ENCODE measurements at regions of chr1 and their contacts with region 1.

Region 1: DNA sequence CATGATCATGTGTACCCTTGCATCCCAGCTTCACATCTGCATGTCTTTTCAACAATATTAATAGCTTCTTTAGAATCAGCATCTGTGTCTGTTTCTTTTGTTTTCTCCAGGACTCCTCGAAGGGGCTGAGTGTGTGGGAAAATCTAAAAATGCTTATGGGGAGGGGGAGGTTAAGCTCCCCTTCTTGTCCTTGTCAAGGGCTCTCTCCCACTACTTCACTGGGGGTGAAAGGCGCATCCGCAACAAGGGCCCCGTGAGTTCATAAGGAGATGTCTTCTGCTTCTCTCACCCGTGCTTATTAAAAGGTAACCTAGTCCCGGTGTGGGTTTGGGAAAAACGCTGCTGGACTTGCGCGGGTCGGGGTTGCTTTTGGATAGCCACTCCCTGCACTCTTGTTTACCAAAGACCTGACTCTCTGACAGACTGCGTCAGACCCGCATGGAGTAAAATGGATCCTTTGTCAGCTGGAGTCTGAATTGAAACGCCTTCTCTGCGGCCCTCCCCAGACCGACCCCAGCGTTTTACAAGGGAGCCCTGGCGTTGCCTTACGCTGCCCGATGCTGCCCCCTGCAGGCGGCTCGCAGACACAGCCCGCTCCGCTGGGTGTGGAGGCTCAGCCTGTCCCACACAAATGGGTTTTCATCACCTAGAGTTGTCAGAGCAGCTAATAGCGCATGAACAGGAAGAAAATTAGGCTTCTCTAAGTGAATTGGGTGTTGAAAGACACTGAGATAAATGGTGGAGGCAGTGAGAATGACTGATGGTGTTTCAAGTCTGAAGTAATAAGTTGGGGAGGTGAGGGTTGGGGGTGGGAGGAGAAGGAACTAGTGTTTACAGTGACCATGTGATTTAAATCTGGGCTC is 53.8 kb downstream of the IER5 start:
- DNase-seq: peak; percentile 96
- H3K4me3 ChIP-seq: peak overlapping the region; percentile 36 to 53 (median 39)
- H3K27ac ChIP-seq: peak overlapping the region in 3 of 4 donors; percentile 1 to 49 (median 25)
- H3K4me1 ChIP-seq: peaks cover 12 to 31% (median 26%) of the 10 kb centered on the region in 4 donors
- H3K27me3 ChIP-seq: no peaks in the 10 kb centered on the region
- CTCF ChIP-seq: peak; percentile 96 to 98 (median 97)
- EP300 ChIP-seq: no peak
- POLR2A ChIP-seq: no peak

Region 2: DNA sequence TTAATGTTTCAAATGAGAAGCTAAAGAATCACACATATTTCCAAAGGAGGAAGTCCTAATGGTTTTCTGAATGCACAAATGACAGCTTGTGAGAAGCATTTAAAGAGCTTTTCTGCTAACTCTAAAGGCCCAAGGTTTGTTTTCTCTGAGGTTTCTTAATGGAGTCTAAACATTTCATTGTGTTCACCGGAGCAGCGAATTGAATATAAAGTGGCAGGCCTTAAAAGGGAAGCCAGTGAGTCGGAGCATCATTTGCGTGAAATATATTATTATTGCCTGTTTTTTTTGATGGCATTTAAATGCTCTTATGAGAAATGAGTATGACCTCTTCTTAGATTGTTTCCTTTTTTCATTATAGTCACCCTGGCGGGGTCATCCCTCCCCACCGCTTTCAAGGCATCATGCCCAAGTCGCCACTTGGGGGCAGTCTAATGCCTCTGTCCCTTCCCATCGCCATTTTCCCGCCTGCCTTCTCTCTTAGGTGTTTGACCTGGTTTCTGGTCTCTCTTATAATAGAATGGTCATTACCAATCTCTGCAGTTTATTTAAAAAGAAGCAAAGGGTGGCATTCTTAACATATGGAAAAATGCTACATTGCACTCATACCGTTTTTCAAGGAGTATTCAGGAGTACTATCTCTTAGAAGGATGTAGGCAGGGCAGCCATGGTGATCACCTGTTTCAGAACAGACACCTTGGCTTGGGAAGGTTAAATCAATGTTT is 608.9 kb before region 1 on chr1:
- intact Hi-C with region 1: loop called (anchors 10 kb)
- DNase-seq: no peak
- H3K4me3 ChIP-seq: no peak overlapping the region
- H3K27ac ChIP-seq: no peak overlapping the region
- H3K4me1 ChIP-seq: peaks cover 4 to 9% (median 5%) of the 10 kb centered on the region in 4 donors
- H3K27me3 ChIP-seq: no peaks in the 10 kb centered on the region
- CTCF ChIP-seq: peak; percentile 81 to 87 (median 84)
- EP300 ChIP-seq: no peak
- POLR2A ChIP-seq: no peak

Region 3: GRCh38 chr1:180881806-180882509 is 260.4 kb before region 1 on chr1:
- intact Hi-C with region 1: loop called (anchors 2 kb)
- DNase-seq: no peak
- H3K4me3 ChIP-seq: no peak overlapping the region
- H3K27ac ChIP-seq: no peak overlapping the region
- H3K4me1 ChIP-seq: no peaks in the 10 kb centered on the region
- H3K27me3 ChIP-seq: no peaks in the 10 kb centered on the region
- CTCF ChIP-seq: peak; percentile 39 to 50 (median 47)
- EP300 ChIP-seq: no peak
- POLR2A ChIP-seq: no peak

Region 4: GRCh38 chr1:181038399-181038873 is 103.9 kb before region 1 on chr1:
- intact Hi-C with region 1: loop called (anchors 1 kb)
- DNase-seq: no peak
- H3K4me3 ChIP-seq: no peak overlapping the region
- H3K27ac ChIP-seq: no peak overlapping the region
- H3K4me1 ChIP-seq: peaks cover 15 to 63% (median 48%) of the 10 kb centered on the region in 4 donors
- H3K27me3 ChIP-seq: no peaks in the 10 kb centered on the region
- CTCF ChIP-seq: peak; percentile 62 to 79 (median 75)
- EP300 ChIP-seq: no peak
- POLR2A ChIP-seq: no peak

Region 5: GRCh38 chr1:181088079-181089016 is 54.0 kb before region 1 on chr1 and contains the start of gene IER5:
- intact Hi-C with region 1: loop called (anchors 2 kb)
- DNase-seq: peak; percentile 99
- H3K4me3 ChIP-seq: peak within 1 kb of the TSS; percentile 81 to 98 (median 90)
- H3K27ac ChIP-seq: peak within 1 kb of the TSS; percentile 93 to 98 (median 98)
- H3K4me1 ChIP-seq: peaks cover 35 to 39% (median 37%) of the 10 kb centered on the region in 4 donors
- H3K27me3 ChIP-seq: no peaks in the 10 kb centered on the region
- CTCF ChIP-seq: no peak
- EP300 ChIP-seq: no peak
- POLR2A ChIP-seq: peak; percentile 99
- total RNA-seq, gene IER5: 14.5 to 22.0 (median 16.7) TPM

Region 6: DNA sequence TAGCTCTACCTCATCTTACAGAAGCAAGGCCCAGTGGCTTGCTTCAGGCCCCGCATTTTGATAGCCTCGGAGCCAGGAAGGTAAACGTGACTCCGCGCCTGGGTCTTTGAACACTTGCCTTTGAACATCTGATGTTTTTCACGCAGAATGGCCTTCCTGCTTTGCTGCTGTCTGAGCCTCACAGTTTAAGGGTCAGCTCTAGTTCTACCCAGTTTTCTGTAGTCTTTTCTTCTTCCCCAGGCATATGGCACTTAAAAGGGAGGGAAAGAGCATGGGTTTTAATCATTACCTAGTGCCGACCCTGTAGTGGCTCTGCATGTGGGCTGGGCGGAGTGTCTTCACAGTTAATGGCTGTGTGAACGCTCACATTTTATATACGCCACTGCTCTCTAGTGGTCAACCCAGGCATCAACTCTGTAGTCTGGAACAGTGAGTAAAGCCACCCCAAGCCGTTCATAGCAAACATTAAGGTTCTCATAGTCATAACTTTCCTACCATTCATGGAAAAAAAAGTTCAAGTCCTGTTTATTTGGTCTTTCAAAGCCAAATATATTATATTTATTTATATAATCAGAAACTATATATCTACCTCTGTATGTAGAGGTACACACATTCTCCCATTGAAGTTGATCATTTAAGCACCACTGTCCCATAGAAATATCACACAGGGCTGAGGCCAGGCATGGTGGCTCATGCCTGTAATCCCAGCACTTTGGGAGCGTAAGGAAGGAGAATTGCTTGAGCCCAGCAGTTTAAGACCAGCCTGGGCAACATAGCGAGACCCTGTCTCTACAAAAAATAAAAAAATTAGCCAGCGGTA is 24.3 kb after region 1 on chr1:
- intact Hi-C with region 1: loop called (anchors 2 kb)
- DNase-seq: no peak
- H3K4me3 ChIP-seq: no peak overlapping the region
- H3K27ac ChIP-seq: no peak overlapping the region
- H3K4me1 ChIP-seq: peaks cover 0 to 5% (median 5%) of the 10 kb centered on the region in 4 donors
- H3K27me3 ChIP-seq: no peaks in the 10 kb centered on the region
- CTCF ChIP-seq: peak; percentile 83 to 88 (median 85)
- EP300 ChIP-seq: no peak
- POLR2A ChIP-seq: no peak

Measured in esophagus muscularis mucosa (tissue), 4 donors.